ENCODE measurements at regions of chr4 and their contacts with region 1.

Region 1: DNA sequence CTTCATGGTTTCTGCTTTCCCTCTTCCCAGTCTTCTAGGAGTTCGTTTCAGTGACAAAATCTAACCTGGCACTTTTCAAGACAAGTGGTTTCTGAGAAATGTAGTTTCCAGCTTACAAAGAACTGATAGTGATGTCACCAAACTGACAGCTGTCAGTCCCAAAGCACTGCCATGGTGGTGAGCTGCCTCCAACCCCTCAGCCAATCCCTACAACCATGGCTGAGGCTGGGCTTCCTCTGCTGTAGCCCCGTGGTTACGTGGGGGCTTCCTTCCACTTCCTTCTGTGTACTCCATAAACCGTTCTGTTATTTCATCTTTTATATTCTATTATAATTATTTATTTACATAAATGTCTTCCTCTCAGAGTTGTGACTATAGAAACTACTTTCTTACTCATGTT is 198.6 kb upstream of the AGA start:
- DNase-seq: no peak
- H3K4me3 ChIP-seq: no peak overlapping the region
- H3K27ac ChIP-seq: no peak overlapping the region
- H3K4me1 ChIP-seq: no peaks in the 10 kb centered on the region
- H3K27me3 ChIP-seq: no peaks in the 10 kb centered on the region
- CTCF ChIP-seq: no peak
- EP300 ChIP-seq: no peak
- POLR2A ChIP-seq: no peak

Region 2: DNA sequence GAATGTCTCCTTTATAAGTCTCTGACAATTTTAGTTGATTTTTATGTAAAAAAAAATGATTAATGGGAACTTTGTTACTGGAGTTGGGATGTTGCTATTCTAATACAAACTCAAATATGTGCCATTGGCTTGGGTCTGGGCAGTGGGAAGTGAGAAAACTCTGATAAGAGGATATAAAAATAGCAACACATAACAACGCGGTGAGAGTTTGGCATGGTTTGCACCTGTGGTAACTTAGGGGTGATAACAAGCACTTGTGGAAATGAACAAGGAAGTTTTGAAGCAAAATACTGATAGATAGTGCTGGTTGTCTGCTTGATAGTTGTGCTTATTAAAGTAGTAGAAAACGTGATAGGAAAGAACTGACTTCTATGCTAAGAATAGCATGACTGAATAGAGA is 544.7 kb after region 1 on chr4:
- in situ Hi-C with region 1: no loop called
- intact Hi-C with region 1: loop called (anchors 5 kb)
- DNase-seq: no peak
- H3K4me3 ChIP-seq: no peak overlapping the region
- H3K27ac ChIP-seq: no peak overlapping the region
- H3K4me1 ChIP-seq: no peaks in the 10 kb centered on the region
- H3K27me3 ChIP-seq: no peaks in the 10 kb centered on the region
- CTCF ChIP-seq: no peak
- EP300 ChIP-seq: no peak
- POLR2A ChIP-seq: no peak